Body of pancreas (tissue), 4 donors: ENCODE measurements at regions of chr17 and their contacts with region 1.

Region 1: DNA sequence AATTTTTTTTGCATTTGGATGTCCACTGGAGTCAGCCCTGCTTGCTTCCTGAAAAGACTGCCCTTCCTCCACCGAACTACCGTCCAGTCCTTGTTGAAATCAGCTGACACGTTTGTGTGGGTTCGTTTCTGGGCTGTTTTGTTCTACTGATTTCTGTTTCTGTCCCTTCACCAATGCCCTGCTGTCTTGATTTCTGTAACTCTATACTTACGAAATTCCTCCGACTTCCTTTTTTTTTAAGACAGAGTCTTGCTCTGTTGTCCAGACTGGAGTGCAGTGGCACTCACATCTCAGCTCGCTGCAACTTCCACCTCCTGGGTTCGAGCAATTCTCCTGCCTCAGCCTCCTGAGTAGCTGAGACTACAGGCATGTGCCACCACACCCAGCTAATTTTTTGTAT is 8.4 kb upstream of the GAA start:
- DNase-seq: peak in 1 of 4 donors; percentile 61
- ATAC-seq: no peak
- H3K4me3 ChIP-seq: no peak overlapping the region
- H3K27ac ChIP-seq: peak overlapping the region in 1 of 4 donors; percentile 46
- H3K4me1 ChIP-seq: no peaks in the 10 kb centered on the region
- H3K27me3 ChIP-seq: no peaks in the 10 kb centered on the region
- CTCF ChIP-seq: no peak
- POLR2A ChIP-seq: no peak

Region 2: DNA sequence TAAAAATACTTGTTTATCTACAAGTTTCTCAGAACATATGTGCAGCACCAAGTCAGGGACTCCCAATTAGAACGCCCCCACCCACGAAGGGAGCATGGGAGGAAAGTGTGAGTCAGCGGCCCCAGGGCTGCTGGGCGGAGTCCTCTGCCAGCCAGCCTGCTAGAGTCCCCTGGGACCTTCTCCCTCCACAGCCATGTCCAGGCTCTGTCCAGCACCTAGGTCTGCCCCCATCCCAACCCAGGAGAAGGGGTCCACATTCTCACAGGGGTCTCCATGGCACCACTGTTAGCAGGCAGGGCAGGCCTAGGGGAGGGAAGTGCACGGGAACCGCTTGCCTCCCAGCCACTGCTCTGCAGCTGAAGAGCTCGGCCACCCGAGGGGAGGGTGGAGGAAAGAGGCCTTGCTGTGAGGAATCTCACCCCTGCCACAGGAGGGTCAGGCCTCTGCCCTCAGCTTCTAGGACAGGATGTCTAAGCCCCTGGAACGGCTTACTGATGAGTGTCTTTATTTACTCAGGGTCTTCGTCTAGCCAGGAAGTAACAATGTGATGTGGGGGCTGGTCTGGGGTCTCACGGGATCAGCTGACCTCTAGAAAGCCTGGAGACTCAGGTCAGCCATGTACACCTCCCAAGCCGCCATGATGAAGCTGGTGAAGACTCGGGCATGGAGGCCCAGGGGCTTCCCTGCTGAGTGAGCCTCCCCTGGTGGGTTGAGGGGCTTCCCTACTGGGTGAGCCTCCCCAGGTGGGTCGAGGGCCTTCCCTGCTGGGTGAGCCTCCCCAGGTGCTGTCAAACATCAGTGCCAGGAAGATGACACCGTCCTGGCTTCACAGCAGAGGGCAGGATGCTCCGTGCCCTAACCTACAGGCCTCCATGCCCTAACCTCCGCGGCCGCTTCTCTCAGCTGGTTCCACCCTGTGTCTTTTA is 672.4 kb before region 1 on chr17:
- intact Hi-C with region 1: no loop called
- DNase-seq: no peak
- ATAC-seq: no peak
- H3K4me3 ChIP-seq: no peak overlapping the region
- H3K27ac ChIP-seq: no peak overlapping the region
- H3K4me1 ChIP-seq: no peaks in the 10 kb centered on the region
- H3K27me3 ChIP-seq: peaks cover 0 to under 1% of the 10 kb centered on the region in 2 donors
- CTCF ChIP-seq: no peak
- POLR2A ChIP-seq: no peak

Region 3: GRCh38 chr17:80263253-80264204 is 170.6 kb after region 1 on chr17:
- intact Hi-C with region 1: loop called (anchors 10 kb)
- DNase-seq: peak; percentile 79 to 92 (median 89)
- ATAC-seq: peak; percentile 56
- H3K4me3 ChIP-seq: peak overlapping the region in 1 of 2 donors; percentile 9
- H3K27ac ChIP-seq: peak overlapping the region; percentile 72 to 99 (median 96)
- H3K4me1 ChIP-seq: peaks cover 47% of the 10 kb centered on the region
- H3K27me3 ChIP-seq: no peaks in the 10 kb centered on the region
- CTCF ChIP-seq: peak in 3 of 7 experiments; percentile 12 to 23 (median 16)
- POLR2A ChIP-seq: peak; percentile 21 to 92 (median 87)